Calu3 (cell line): ENCODE measurements at regions of chr2 and their contacts with region 1.

Region 1: DNA sequence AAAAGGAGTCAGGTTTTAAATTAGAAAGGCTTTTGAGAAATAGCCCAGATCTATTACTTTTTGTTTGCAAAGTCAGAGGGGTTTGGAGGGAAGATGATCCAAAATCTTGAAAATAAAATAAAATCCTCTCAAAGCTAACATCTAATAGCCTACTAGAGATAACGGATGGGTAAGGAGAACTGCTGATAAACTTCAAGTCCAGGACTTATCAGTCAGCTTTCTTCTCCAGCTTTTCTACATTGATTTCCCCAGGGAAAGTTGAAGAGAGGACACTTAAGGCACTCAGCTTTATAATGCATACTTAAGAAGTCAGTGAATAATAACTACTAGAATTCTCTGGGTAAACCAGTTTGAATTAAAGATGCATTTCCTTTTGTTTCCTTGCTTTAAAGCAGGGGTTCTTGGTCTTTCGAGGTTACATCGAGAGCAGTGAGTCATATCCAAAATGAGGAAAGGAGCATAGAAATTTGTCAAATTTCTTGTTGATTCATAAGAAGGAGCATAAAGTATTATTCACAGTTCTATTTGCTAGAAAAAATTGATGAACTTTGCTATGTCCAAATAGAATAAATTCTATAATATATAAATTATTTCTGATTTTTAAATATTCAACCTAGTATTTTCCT is 43.2 kb upstream of the ITPRID2 start:
- DNase-seq: no peak
- H3K4me3 Mint-ChIP-seq: no peak overlapping the region
- H3K27ac Mint-ChIP-seq: peak overlapping the region; percentile 67
- H3K4me1 Mint-ChIP-seq: peaks cover 54% of the 10 kb centered on the region
- H3K27me3 Mint-ChIP-seq: no peaks in the 10 kb centered on the region
- CTCF ChIP-seq: no peak

Region 2: DNA sequence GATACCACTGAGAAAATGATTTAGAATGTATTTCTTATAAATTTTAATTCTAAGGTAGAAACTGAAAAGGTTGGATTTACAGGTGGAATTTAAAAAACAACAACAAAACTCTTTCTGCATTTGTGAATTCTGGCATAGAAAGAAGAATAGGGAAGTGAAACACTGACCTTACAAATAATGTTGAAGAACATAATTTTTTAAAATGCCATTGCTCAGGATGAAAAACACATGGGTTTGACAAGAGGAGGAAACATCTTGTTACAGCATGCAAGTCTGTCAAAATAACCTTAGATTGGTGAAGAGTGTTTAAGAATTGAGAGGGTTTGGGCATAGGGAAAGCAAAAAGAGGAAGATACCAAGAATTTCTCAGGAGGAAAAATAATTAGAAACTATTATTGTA is 683.7 kb before region 1 on chr2:
- CTCF ChIA-PET with region 1: no interaction called
- intact Hi-C with region 1: no loop called
- DNase-seq: no peak
- H3K4me3 Mint-ChIP-seq: no peak overlapping the region
- H3K27ac Mint-ChIP-seq: no peak overlapping the region
- H3K4me1 Mint-ChIP-seq: no peaks in the 10 kb centered on the region
- H3K27me3 Mint-ChIP-seq: no peaks in the 10 kb centered on the region
- CTCF ChIP-seq: no peak

Region 3: GRCh38 chr2:181586569-181587081 is 261.7 kb before region 1 on chr2:
- CTCF ChIA-PET with region 1: no interaction called
- intact Hi-C with region 1: no loop called
- DNase-seq: peak; percentile 71
- H3K4me3 Mint-ChIP-seq: peak overlapping the region; percentile 65
- H3K27ac Mint-ChIP-seq: peak overlapping the region; percentile 85
- H3K4me1 Mint-ChIP-seq: peaks cover 72% of the 10 kb centered on the region
- H3K27me3 Mint-ChIP-seq: no peaks in the 10 kb centered on the region
- CTCF ChIP-seq: no peak

Region 4: GRCh38 chr2:181780047-181780651 is 68.2 kb before region 1 on chr2:
- CTCF ChIA-PET with region 1: no interaction called
- intact Hi-C with region 1: loop called (anchors 2 kb)
- DNase-seq: peak; percentile 31
- H3K4me3 Mint-ChIP-seq: no peak overlapping the region
- H3K27ac Mint-ChIP-seq: peak overlapping the region; percentile 90
- H3K4me1 Mint-ChIP-seq: peaks cover 65% of the 10 kb centered on the region
- H3K27me3 Mint-ChIP-seq: no peaks in the 10 kb centered on the region
- CTCF ChIP-seq: no peak

Region 5: DNA sequence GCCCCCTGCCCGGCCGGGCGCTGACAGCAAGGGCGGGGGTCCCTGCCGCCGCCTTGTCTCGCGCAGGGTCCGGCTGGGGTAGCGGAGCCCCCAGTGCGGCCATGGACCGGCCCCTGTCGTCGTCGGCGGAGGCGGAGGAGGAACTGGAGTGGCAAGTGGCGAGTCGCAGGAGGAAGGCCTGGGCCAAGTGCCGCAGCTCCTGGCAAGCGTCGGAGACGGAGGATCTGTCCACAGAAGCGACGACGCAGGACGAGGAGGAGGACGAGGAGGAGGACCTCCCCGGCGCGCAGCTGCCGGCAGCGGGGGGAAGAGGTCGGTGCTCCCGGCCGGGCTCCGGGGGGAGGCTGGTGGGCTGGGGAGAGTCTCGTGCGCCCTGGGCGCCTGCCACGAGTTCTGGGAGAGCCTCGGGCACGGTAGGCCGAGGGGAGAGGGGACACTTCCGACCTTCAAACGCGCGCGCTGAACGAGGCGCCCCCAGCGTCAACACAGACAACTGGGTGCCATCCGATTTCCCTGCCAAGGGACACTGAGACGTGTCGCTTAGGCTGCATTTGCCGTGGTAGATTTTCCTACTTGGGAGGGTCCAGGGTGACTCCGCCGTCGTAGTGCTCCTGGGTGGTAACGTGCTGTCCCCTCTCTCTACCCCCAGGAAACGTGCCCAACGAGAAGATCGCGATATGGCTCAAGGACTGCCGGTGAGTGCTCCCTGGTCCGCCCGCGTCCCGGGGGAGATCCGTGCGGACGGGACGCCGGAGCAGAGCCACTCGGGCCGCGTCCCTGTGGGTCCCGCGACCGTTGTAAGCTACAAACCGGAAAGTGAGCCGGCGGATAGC is 43.8 kb after region 1 on chr2:
- CTCF ChIA-PET with region 1: interaction called, 3 read pairs
- intact Hi-C with region 1: loop called (anchors 2 kb)
- DNase-seq: peak; percentile 62
- H3K4me3 Mint-ChIP-seq: peak overlapping the region; percentile 98
- H3K27ac Mint-ChIP-seq: peak overlapping the region; percentile 90
- H3K4me1 Mint-ChIP-seq: peaks cover 29% of the 10 kb centered on the region
- H3K27me3 Mint-ChIP-seq: no peaks in the 10 kb centered on the region
- CTCF ChIP-seq: no peak

Region 6: GRCh38 chr2:181904022-181904632 is 55.8 kb after region 1 on chr2:
- CTCF ChIA-PET with region 1: interaction called, 5 read pairs
- intact Hi-C with region 1: loop called (anchors 2 kb)
- DNase-seq: no peak
- H3K4me3 Mint-ChIP-seq: peak overlapping the region; percentile 68
- H3K27ac Mint-ChIP-seq: peak overlapping the region; percentile 95
- H3K4me1 Mint-ChIP-seq: peaks cover 74% of the 10 kb centered on the region
- H3K27me3 Mint-ChIP-seq: no peaks in the 10 kb centered on the region
- CTCF ChIP-seq: peak; percentile 59